ENCODE measurements at regions of chr18 and their contacts with region 1.

Region 1: GRCh38 chr18:13520306-13520705 is 206.1 kb downstream of the FAM210A start:
- DNase-seq: no peak
- H3K4me3 ChIP-seq: no peak overlapping the region
- H3K27ac ChIP-seq: no peak overlapping the region
- H3K4me1 ChIP-seq: no peaks in the 10 kb centered on the region
- H3K27me3 ChIP-seq: no peaks in the 10 kb centered on the region

Region 2: DNA sequence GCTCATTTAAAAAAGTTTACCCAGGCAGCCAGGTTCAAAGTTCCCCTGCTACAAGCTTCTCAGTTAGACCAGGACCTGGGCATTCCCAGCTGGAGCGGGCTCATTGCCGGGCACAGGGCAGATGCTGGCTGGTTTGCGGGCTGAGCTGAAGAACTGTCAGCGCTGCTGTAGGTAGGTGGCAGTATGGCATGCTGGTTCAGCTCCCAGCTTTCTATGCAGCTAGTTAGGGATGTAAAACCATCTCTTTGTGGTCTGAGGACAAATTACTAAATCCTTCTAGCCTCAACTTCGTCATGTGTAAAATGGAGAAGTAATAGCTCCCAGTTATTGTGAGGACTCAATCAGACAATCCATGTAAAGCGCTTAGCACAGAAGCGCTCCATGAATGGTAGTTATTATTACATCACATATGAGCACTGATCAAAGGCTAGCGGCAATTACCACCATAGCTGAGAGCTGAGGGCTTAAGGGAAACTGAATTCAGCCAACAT is 304.2 kb before region 1 on chr18:
- in situ Hi-C with region 1: loop called (anchors 10 kb)
- DNase-seq: peak; percentile 74
- H3K4me3 ChIP-seq: no peak overlapping the region
- H3K27ac ChIP-seq: no peak overlapping the region
- H3K4me1 ChIP-seq: no peaks in the 10 kb centered on the region
- H3K27me3 ChIP-seq: peaks cover 78% of the 10 kb centered on the region

Region 3: GRCh38 chr18:13425462-13426133 is 94.7 kb before region 1 on chr18:
- in situ Hi-C with region 1: no loop called
- DNase-seq: no peak
- H3K4me3 ChIP-seq: no peak overlapping the region
- H3K27ac ChIP-seq: no peak overlapping the region
- H3K4me1 ChIP-seq: no peaks in the 10 kb centered on the region
- H3K27me3 ChIP-seq: no peaks in the 10 kb centered on the region

Region 4: GRCh38 chr18:13688191-13689136 is 168.2 kb after region 1 on chr18:
- in situ Hi-C with region 1: no loop called
- DNase-seq: no peak
- H3K4me3 ChIP-seq: no peak overlapping the region
- H3K27ac ChIP-seq: no peak overlapping the region
- H3K4me1 ChIP-seq: no peaks in the 10 kb centered on the region
- H3K27me3 ChIP-seq: no peaks in the 10 kb centered on the region

Region 5: GRCh38 chr18:14053661-14054060 is 533.4 kb after region 1 on chr18:
- in situ Hi-C with region 1: no loop called
- DNase-seq: no peak
- H3K4me3 ChIP-seq: no peak overlapping the region
- H3K27ac ChIP-seq: no peak overlapping the region
- H3K4me1 ChIP-seq: no peaks in the 10 kb centered on the region
- H3K27me3 ChIP-seq: no peaks in the 10 kb centered on the region

Measured in GM23248 (cell line).